B cell (primary cell): ENCODE measurements at regions of chr11 and their contacts with region 1.

Region 1: DNA sequence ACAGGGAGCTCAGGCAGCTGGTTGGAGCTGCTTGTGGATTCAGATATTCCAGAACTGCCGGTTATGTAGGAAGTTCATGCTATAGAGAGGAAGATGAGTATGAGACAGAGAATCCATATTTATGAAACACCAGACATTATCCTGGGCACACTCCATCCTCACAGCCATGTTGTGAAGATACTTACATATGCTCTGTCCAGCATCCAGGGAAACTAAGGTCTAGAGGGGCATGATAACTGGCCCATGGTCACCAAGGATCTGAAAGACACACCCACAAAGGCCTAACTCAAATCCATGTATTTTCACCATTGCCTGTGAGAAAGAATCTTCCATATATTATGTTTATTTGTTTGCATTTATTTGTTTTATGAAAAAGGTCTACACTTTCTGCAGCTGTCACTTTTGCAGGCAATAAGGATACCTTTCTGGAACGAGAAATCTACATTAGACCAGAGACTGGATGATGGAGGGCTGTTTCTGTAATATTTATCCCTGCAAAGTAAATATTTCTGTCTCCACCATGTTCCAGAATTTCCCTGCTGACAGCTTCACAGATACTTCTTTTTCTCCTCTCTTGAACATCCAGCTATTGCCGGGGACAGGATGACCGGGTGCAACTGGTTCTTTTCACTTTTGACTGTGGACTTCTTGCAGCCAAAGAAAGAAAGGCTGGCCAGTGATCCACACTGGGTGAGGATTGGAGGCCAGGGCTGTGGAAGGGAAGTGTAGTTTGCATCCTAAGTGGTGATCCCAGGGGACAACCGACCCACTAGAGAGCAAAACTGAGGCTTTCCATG is 145.9 kb upstream of the NAV2 start:
- DNase-seq: no peak
- ATAC-seq: no peak
- H3K4me3 ChIP-seq: no peak overlapping the region
- H3K4me3 Mint-ChIP-seq: no peak overlapping the region
- H3K27ac ChIP-seq: no peak overlapping the region
- H3K27ac Mint-ChIP-seq: no peak overlapping the region
- H3K4me1 ChIP-seq: no peaks in the 10 kb centered on the region
- H3K4me1 Mint-ChIP-seq: no peaks in the 10 kb centered on the region
- H3K27me3 ChIP-seq: peaks cover 0 to 25% (median 6%) of the 10 kb centered on the region in 4 experiments
- H3K27me3 Mint-ChIP-seq: peaks cover 12% of the 10 kb centered on the region
- CTCF ChIP-seq: no peak

Region 2: DNA sequence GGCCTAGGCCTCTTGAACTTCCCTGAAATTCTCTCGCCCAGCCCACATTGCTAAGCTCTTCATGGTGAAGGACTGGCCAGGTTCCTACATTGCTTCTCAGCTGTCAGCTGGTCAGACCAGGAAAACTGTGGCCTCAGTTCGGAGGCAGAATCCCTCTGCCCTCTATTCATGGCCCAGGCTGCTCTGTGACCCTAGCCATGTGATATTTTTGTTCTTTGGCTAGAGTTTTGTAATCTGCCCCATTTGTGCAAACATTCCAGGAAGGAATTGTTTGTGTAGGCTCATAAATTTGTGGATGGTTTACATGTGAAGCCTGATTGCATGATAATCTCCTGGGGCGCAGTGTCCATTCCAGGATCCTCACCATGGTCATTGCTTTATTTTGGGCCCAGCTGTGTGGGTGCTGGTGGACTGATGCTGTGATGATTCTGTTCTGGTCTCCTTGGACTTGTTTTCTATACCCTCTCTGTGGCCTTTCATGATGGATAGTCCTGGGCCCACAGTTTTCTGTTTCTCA is 176.9 kb before region 1 on chr11:
- CTCF ChIA-PET with region 1: no interaction called
- POLR2A ChIA-PET with region 1: no interaction called
- intact Hi-C with region 1: no loop called
- DNase-seq: no peak
- ATAC-seq: no peak
- H3K4me3 ChIP-seq: no peak overlapping the region
- H3K4me3 Mint-ChIP-seq: no peak overlapping the region
- H3K27ac ChIP-seq: no peak overlapping the region
- H3K27ac Mint-ChIP-seq: no peak overlapping the region
- H3K4me1 ChIP-seq: no peaks in the 10 kb centered on the region
- H3K4me1 Mint-ChIP-seq: no peaks in the 10 kb centered on the region
- H3K27me3 ChIP-seq: no peaks in the 10 kb centered on the region
- H3K27me3 Mint-ChIP-seq: peaks cover 16% of the 10 kb centered on the region
- CTCF ChIP-seq: no peak

Region 3: GRCh38 chr11:19742588-19743292 is 176.0 kb after region 1 on chr11:
- CTCF ChIA-PET with region 1: interaction called, 46 read pairs
- POLR2A ChIA-PET with region 1: no interaction called
- intact Hi-C with region 1: loop called (anchors 1 kb)
- DNase-seq: peak; percentile 54
- ATAC-seq: peak; percentile 54
- H3K4me3 ChIP-seq: no peak overlapping the region
- H3K4me3 Mint-ChIP-seq: no peak overlapping the region
- H3K27ac ChIP-seq: no peak overlapping the region
- H3K27ac Mint-ChIP-seq: no peak overlapping the region
- H3K4me1 ChIP-seq: no peaks in the 10 kb centered on the region
- H3K4me1 Mint-ChIP-seq: no peaks in the 10 kb centered on the region
- H3K27me3 ChIP-seq: no peaks in the 10 kb centered on the region
- H3K27me3 Mint-ChIP-seq: peaks cover 16% of the 10 kb centered on the region
- CTCF ChIP-seq: peak; percentile 77

Region 4: DNA sequence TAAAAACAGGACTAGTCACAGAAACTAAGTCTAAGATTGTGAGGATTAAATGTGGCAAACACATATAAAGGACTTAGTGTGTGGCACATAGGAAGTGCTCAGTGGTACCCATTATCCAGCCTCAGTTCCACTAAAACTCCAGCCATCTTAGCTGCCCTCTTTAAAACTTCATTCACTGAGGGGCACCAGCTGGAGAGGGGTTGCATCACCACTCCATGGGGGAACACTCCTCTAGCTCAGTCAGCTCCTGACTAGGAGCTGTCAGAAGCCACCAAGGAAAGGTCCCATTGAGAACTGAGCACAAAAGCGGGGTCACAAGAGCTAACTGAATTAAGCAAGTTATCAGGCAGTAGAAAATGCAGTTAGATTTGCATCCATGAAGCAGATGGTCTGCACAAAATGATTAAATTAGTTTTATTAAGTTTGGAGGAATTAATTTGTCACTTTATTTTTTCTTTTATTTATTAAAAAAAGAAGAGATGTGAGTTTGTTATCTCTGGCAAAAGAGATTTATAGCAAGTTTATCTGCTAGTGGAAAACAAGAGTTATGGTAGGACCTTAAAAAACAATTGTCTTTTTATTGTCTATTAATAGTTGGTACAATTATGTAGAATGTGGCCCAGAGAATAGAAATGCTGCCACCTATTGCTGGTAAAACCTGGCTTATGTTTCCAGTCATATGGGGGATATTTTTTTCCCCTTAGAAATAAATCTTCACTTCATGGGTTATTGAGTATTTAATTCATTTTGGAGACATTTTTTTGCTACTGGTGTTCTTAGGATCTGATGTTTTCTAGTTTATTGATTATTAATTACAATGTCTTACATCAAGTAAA is 241.5 kb after region 1 on chr11:
- CTCF ChIA-PET with region 1: interaction called, 17 read pairs
- POLR2A ChIA-PET with region 1: no interaction called
- intact Hi-C with region 1: loop called (anchors 1 kb)
- DNase-seq: no peak
- ATAC-seq: no peak
- H3K4me3 ChIP-seq: no peak overlapping the region
- H3K4me3 Mint-ChIP-seq: no peak overlapping the region
- H3K27ac ChIP-seq: no peak overlapping the region
- H3K27ac Mint-ChIP-seq: no peak overlapping the region
- H3K4me1 ChIP-seq: no peaks in the 10 kb centered on the region
- H3K4me1 Mint-ChIP-seq: no peaks in the 10 kb centered on the region
- H3K27me3 ChIP-seq: no peaks in the 10 kb centered on the region
- H3K27me3 Mint-ChIP-seq: peaks cover 19% of the 10 kb centered on the region
- CTCF ChIP-seq: no peak

Region 5: GRCh38 chr11:19903620-19904069 is 336.9 kb after region 1 on chr11:
- CTCF ChIA-PET with region 1: interaction called, 32 read pairs
- POLR2A ChIA-PET with region 1: no interaction called
- intact Hi-C with region 1: no loop called
- DNase-seq: peak; percentile 39
- ATAC-seq: no peak
- H3K4me3 ChIP-seq: no peak overlapping the region
- H3K4me3 Mint-ChIP-seq: no peak overlapping the region
- H3K27ac ChIP-seq: no peak overlapping the region
- H3K27ac Mint-ChIP-seq: no peak overlapping the region
- H3K4me1 ChIP-seq: no peaks in the 10 kb centered on the region
- H3K4me1 Mint-ChIP-seq: no peaks in the 10 kb centered on the region
- H3K27me3 ChIP-seq: no peaks in the 10 kb centered on the region
- H3K27me3 Mint-ChIP-seq: no peaks in the 10 kb centered on the region
- CTCF ChIP-seq: peak; percentile 58